ENCODE measurements at regions of chr20 and their contacts with region 1.

Region 1: GRCh38 chr20:44231713-44232468 is 15.2 kb upstream of the GDAP1L1 start:
- DNase-seq: no peak
- H3K4me3 ChIP-seq: no peak overlapping the region
- H3K27ac ChIP-seq: no peak overlapping the region
- H3K4me1 ChIP-seq: no peaks in the 10 kb centered on the region
- H3K27me3 ChIP-seq: no peaks in the 10 kb centered on the region
- CTCF ChIP-seq: no peak
- EP300 ChIP-seq: no peak
- POLR2A ChIP-seq: no peak

Region 2: DNA sequence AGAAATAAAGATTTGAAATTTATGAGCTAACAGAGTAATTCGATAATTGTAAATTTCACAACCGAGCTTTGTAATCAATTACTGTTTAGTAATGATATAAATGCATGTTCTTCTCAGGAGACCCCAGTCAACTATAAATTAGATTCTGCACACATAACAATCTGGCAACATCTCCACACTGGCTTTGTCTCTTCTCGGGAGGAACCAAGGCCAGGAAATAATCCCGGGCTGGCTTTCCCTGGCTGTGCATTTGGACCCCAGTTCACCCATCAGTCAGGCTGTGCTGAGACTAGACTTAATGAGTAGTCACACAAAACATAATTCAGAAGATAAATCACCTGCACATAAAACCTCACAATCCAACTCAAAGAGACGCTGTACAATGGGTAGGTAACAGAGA is 1107.7 kb before region 1 on chr20:
- intact Hi-C with region 1: loop called in 1 of 4 experiments (anchors 10 kb)
- DNase-seq: no peak
- H3K4me3 ChIP-seq: no peak overlapping the region
- H3K27ac ChIP-seq: no peak overlapping the region
- H3K4me1 ChIP-seq: no peaks in the 10 kb centered on the region
- H3K27me3 ChIP-seq: no peaks in the 10 kb centered on the region
- CTCF ChIP-seq: no peak
- EP300 ChIP-seq: no peak
- POLR2A ChIP-seq: no peak